Common myeloid progenitor, CD34-positive (primary cell): ENCODE measurements at regions of chr2 and their contacts with region 1.

Region 1: DNA sequence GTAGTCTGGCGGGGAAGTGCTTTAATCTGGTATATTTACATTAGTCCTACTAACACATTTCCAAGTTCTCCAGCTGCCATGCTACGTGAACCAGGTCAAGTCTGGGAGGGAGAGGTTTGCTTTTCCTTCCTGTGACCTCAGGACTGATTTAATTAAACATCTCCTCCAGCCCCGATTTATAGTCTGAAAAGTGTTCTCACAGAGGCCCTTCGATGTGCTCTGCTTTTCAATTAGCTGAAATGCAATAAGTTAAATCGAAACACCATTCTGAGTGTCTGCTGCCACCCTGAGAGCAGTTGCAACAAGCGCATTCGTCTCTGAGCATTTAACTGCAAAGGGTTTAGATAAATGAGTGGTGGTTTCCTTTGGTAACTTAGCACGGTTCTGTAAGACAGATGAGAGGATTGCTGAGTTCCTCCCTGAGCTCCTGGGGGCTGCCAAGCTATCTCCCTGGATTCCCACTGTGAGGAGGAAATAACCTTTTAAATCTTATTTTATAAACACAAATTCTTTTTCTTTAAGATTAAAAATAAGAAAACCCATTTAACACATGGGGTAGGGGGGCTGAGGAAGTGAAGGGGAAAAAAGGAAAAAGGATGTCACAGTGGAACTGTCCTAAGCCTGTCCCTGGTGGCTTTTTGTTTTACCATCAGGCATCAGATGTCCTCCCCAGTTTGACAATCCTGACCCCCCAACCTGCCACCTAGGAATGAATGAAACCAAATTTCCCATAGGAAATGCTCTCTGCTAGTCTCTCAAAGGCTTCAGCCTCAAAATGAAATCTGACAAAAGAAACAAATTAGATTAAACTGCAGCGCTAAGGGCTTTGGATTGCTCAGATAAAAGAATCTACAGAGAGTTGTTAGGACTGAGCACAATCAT is 56.5 kb upstream of the CREB1 start:
- DNase-seq: peak; percentile 70 to 79 (median 78)
- H3K4me3 ChIP-seq: no peak overlapping the region
- H3K27ac ChIP-seq: no peak overlapping the region
- H3K4me1 ChIP-seq: peaks cover 0 to 12% (median 5%) of the 10 kb centered on the region in 4 experiments
- H3K27me3 ChIP-seq: no peaks in the 10 kb centered on the region

Region 2: GRCh38 chr2:206981739-206982340 is 491.4 kb before region 1 on chr2:
- CTCF ChIA-PET with region 1: interaction called, 53 read pairs
- POLR2A ChIA-PET with region 1: interaction called, 3 read pairs
- DNase-seq: peak; percentile 60 to 86 (median 80)
- H3K4me3 ChIP-seq: no peak overlapping the region
- H3K27ac ChIP-seq: no peak overlapping the region
- H3K4me1 ChIP-seq: peaks cover 0 to 28% (median 0%) of the 10 kb centered on the region in 4 experiments
- H3K27me3 ChIP-seq: no peaks in the 10 kb centered on the region

Region 3: DNA sequence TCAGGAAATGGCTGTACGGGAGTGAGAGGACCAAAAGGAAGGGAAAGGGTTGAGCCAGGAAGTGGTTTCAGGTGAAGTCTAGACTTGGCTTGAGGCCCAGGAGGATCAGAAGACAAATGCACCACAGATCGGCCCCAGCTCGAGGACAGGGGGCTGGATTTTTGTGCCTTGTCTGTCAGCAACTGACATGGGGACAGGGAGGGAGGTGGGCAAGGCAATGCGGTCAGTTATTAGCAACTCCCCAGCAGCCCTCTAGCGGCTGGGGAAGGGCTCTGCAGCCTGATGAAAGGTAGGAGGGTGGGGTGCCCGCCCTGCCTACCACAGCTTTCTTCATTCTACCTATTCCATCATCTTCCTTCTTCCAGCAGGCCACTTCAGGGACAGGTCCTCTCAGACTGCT is 484.0 kb before region 1 on chr2:
- CTCF ChIA-PET with region 1: interaction called, 53 read pairs
- POLR2A ChIA-PET with region 1: no interaction called
- DNase-seq: peak; percentile 23 to 64 (median 59)
- H3K4me3 ChIP-seq: no peak overlapping the region
- H3K27ac ChIP-seq: no peak overlapping the region
- H3K4me1 ChIP-seq: peaks cover 0 to 37% (median 16%) of the 10 kb centered on the region in 4 experiments
- H3K27me3 ChIP-seq: no peaks in the 10 kb centered on the region

Region 4: DNA sequence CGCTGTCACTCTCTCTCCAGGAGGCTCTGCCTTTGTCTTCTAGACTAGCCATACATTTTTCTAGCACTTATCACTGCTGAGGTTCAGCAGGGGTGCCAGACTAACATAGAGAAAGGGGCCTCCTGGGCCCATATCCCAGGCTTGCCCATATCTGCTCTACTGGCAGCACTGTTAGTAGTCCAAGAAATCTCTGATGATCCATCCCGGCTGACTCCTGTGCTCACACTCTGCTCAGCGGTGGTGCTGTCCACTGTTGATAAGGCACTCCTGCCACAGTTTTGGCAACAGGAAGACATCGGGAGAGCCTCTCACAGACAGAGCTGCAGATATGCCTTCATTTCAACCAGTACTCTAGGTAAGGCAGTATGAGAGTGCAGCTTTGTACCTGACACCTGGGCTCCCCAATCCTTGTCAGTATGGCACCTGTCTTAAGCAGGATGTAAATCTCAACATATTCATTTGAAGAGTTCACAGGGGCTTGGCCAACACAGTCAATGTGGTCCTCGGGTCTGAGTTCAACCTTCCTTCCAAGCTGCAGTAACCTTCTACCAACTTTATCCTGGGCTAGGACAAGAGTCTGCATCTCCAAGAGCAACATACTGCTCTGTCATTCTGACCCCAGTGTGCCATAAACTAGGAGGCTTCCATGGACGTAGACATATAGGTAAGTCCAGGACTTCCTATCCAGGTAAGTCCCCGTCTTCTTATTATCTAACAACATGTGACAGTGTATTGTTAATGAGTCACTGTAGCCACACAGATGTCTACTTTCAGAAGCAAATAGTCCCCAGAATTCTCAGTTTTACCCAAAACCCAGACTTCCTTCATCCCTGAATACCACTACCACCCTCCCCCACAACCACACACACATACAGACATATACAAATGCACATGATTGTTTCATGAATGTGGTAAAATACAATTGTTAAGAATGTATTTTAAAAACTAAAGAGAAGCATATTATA is 323.8 kb before region 1 on chr2:
- CTCF ChIA-PET with region 1: no interaction called
- POLR2A ChIA-PET with region 1: no interaction called
- DNase-seq: peak in 2 of 3 donors; percentile 49 to 68
- H3K4me3 ChIP-seq: peak overlapping the region in 2 of 7 experiments; percentile 52 to 67
- H3K27ac ChIP-seq: peak overlapping the region; percentile 9 to 23
- H3K4me1 ChIP-seq: peaks cover 36 to 78% (median 63%) of the 10 kb centered on the region in 4 experiments
- H3K27me3 ChIP-seq: no peaks in the 10 kb centered on the region

Region 5: DNA sequence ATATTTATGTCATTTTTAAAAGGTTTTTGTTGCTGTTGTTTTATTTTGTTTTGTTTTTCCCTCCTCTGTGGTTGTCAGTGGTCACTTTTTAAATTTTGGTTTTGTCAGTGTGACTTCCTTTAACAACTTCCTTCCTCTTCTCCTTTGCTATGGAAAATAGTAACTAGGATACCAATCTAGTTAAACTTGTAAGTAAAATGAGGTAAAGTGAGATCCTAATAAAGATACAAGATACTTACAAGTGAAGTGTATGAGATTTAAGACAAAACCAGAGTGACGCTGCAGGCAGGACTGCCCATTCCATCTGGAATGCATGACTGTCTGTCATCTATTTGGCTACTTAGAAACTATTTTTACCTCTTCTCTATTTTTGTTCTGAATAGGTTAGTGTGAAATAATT is 25.8 kb after region 1 on chr2:
- CTCF ChIA-PET with region 1: no interaction called
- POLR2A ChIA-PET with region 1: no interaction called
- DNase-seq: peak in 2 of 3 donors; percentile 59 to 70
- H3K4me3 ChIP-seq: no peak overlapping the region
- H3K27ac ChIP-seq: no peak overlapping the region
- H3K4me1 ChIP-seq: peaks cover 4 to 45% (median 10%) of the 10 kb centered on the region in 4 experiments
- H3K27me3 ChIP-seq: no peaks in the 10 kb centered on the region